ENCODE measurements at regions of chr4 and their contacts with region 1.

Region 1: GRCh38 chr4:7857238-7857701 is 82.4 kb downstream of the AFAP1 start:
- DNase-seq: no peak
- ATAC-seq: no peak
- H3K4me3 ChIP-seq: no peak overlapping the region
- H3K4me3 Mint-ChIP-seq: peak overlapping the region in 8 of 10 donors; percentile 17 to 73 (median 44)
- H3K27ac ChIP-seq: no peak overlapping the region
- H3K27ac Mint-ChIP-seq: peak overlapping the region in 8 of 9 donors; percentile 21 to 96 (median 90)
- H3K4me1 ChIP-seq: peaks cover 29 to 48% of the 10 kb centered on the region in 2 donors
- H3K4me1 Mint-ChIP-seq: peaks cover 36 to 74% (median 66%) of the 10 kb centered on the region in 7 donors
- H3K27me3 ChIP-seq: no peaks in the 10 kb centered on the region
- H3K27me3 Mint-ChIP-seq: no peaks in the 10 kb centered on the region

Region 2: GRCh38 chr4:7827991-7828720 is 29.1 kb before region 1 on chr4:
- CTCF ChIA-PET with region 1: interaction called, 3 read pairs
- POLR2A ChIA-PET with region 1: interaction called, 3 read pairs
- intact Hi-C with region 1: loop called (anchors 1 kb)
- DNase-seq: peak in 5 of 9 donors; percentile 10 to 43 (median 24)
- ATAC-seq: peak; percentile 81
- H3K4me3 ChIP-seq: no peak overlapping the region
- H3K4me3 Mint-ChIP-seq: peak overlapping the region in 9 of 10 donors; percentile 23 to 73 (median 63)
- H3K27ac ChIP-seq: peak overlapping the region; percentile 53
- H3K27ac Mint-ChIP-seq: peak overlapping the region; percentile 31 to 95 (median 89)
- H3K4me1 ChIP-seq: peaks cover 14 to 34% of the 10 kb centered on the region in 2 donors
- H3K4me1 Mint-ChIP-seq: peaks cover 29 to 66% (median 61%) of the 10 kb centered on the region in 7 donors
- H3K27me3 ChIP-seq: no peaks in the 10 kb centered on the region
- H3K27me3 Mint-ChIP-seq: peaks cover 0 to 7% (median 0%) of the 10 kb centered on the region in 5 donors

Region 3: DNA sequence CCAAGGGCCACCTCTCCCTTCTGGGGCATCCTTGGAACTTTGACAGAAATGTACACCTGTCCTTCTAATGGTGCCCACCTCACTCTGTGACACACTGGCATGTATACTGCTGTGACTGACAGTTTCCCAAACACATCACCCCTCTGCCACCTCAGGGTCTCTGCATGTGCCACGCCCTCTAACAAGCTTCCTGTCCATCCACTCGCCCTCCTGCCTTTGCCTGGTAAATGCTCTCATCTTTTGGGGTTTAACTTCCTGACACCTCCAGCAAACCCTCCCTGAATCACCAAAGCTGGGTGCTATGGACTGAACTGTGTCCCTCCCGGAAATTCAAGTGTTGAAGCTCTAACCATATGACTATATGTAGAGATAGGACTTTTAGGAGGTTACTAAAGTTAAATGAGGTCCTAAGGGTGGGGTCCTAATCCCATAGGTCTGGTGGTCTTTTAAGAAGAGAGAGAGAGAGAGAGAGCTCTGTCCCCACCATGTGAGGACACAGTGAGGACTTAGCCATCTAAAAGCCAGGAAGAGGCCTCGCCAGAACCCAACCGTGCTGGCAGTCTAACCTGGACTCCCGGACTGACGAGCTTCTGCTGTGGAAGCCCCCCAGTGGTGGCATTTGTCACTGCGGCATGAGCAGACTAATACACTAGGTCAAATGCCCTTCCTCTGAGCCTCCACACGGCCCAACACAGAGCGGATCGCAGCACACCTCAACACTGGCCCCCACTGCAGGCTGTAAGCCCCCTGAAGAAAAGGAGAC is 13.3 kb before region 1 on chr4:
- CTCF ChIA-PET with region 1: interaction called, 6 read pairs
- POLR2A ChIA-PET with region 1: interaction called, 6 read pairs
- intact Hi-C with region 1: loop called in 1 of 2 experiments (anchors 1 kb)
- DNase-seq: peak; percentile 12 to 66 (median 42)
- ATAC-seq: peak; percentile 84
- H3K4me3 ChIP-seq: no peak overlapping the region
- H3K4me3 Mint-ChIP-seq: peak overlapping the region in 2 of 10 donors; percentile 1 to 45
- H3K27ac ChIP-seq: no peak overlapping the region
- H3K27ac Mint-ChIP-seq: peak overlapping the region in 4 of 9 donors; percentile 10 to 62 (median 22)
- H3K4me1 ChIP-seq: peaks cover 4 to 6% of the 10 kb centered on the region in 2 donors
- H3K4me1 Mint-ChIP-seq: peaks cover 17 to 46% (median 40%) of the 10 kb centered on the region in 7 donors
- H3K27me3 ChIP-seq: no peaks in the 10 kb centered on the region
- H3K27me3 Mint-ChIP-seq: no peaks in the 10 kb centered on the region

Region 4: GRCh38 chr4:7876201-7876875 is 19.1 kb after region 1 on chr4:
- CTCF ChIA-PET with region 1: interaction called, 4 read pairs
- POLR2A ChIA-PET with region 1: interaction called, 3 read pairs
- intact Hi-C with region 1: loop called in 1 of 2 experiments (anchors 1 kb)
- DNase-seq: peak in 3 of 9 donors; percentile 11 to 21 (median 15)
- ATAC-seq: peak; percentile 64
- H3K4me3 ChIP-seq: peak overlapping the region; percentile 15
- H3K4me3 Mint-ChIP-seq: peak overlapping the region; percentile 8 to 78 (median 66)
- H3K27ac ChIP-seq: peak overlapping the region; percentile 44
- H3K27ac Mint-ChIP-seq: peak overlapping the region; percentile 56 to 98 (median 80)
- H3K4me1 ChIP-seq: peaks cover 5 to 22% of the 10 kb centered on the region in 2 donors
- H3K4me1 Mint-ChIP-seq: peaks cover 19 to 82% (median 72%) of the 10 kb centered on the region in 7 donors
- H3K27me3 ChIP-seq: no peaks in the 10 kb centered on the region
- H3K27me3 Mint-ChIP-seq: no peaks in the 10 kb centered on the region

Region 5: DNA sequence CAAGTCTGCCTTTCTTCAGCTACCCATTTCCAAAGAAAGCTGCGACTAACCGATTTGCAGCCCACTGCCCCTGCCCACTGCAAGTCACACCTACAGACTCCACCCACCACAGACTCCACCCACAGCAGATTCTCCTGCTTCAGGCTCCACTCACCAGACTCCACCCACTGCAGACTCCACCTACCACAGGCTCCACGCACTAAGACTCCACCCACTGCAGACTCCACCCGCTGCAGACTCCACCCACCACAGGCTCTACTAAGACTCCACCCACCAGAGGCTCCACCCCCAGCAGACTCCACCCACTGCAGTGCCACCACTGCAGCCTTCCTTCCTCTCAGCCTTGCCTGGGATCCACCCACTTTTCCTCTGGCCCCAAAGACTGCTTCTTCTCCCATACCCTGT is 260.0 kb after region 1 on chr4:
- CTCF ChIA-PET with region 1: no interaction called
- POLR2A ChIA-PET with region 1: no interaction called
- intact Hi-C with region 1: no loop called
- DNase-seq: peak in 5 of 9 donors; percentile 5 to 38 (median 16)
- ATAC-seq: peak; percentile 68
- H3K4me3 ChIP-seq: no peak overlapping the region
- H3K4me3 Mint-ChIP-seq: no peak overlapping the region
- H3K27ac ChIP-seq: no peak overlapping the region
- H3K27ac Mint-ChIP-seq: no peak overlapping the region
- H3K4me1 ChIP-seq: peaks cover 0 to 13% of the 10 kb centered on the region in 2 donors
- H3K4me1 Mint-ChIP-seq: peaks cover 0 to 19% (median 10%) of the 10 kb centered on the region in 7 donors
- H3K27me3 ChIP-seq: no peaks in the 10 kb centered on the region
- H3K27me3 Mint-ChIP-seq: peaks cover 0 to 4% (median 0%) of the 10 kb centered on the region in 5 donors

Region 6: DNA sequence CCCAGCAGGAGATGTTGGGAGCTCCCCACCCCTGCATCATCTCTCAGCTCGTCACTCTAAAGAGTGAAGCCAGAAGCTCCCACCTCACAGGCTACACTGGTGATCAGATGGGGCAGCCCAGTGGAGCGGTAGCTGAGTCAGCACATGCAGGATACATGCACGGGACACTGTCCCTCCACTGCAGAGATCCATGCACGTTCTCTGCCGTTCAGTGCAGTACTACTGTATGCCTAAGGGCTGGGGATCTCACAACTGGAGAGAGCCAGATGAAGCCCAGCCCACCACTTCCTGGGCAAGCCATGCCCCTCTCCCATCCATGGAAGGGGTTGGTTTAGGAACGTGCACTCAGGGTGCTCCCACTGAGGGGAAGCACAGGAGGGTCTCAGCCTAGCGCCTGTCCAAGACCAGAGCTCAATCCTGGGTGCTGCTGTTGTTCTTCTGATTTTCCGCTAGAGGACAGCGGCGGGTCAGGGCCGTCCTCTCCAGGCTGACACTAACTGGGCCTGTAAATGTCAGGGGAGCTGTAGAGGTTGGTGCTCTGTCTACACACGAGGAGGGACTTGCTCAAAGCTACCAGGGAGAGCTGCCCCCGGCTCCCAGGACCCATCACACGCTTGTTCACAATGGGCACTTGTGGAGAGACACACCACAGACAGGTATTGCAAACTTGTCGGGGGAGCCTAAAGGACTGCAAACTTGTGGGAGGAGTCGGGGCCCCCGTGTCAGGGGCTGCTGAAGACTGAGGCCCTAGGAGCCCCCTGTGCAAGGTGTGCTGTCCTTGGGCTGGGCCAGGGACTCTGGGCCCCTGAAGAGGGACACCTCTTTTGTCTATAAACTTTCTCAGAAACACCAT is 319.5 kb after region 1 on chr4:
- CTCF ChIA-PET with region 1: no interaction called
- POLR2A ChIA-PET with region 1: no interaction called
- intact Hi-C with region 1: no loop called
- DNase-seq: peak in 7 of 9 donors; percentile 37 to 60 (median 54)
- ATAC-seq: peak; percentile 89
- H3K4me3 ChIP-seq: no peak overlapping the region
- H3K4me3 Mint-ChIP-seq: no peak overlapping the region
- H3K27ac ChIP-seq: no peak overlapping the region
- H3K27ac Mint-ChIP-seq: peak overlapping the region in 2 of 9 donors; percentile 48 to 49
- H3K4me1 ChIP-seq: no peaks in the 10 kb centered on the region
- H3K4me1 Mint-ChIP-seq: peaks cover 0 to 5% (median 0%) of the 10 kb centered on the region in 7 donors
- H3K27me3 ChIP-seq: no peaks in the 10 kb centered on the region
- H3K27me3 Mint-ChIP-seq: peaks cover 0 to under 1% (median 0%) of the 10 kb centered on the region in 5 donors

Measured in naive thymus-derived CD4-positive, alpha-beta T cell (primary cell).